Stomach (tissue), 19 donors: ENCODE measurements at regions of chr11 and their contacts with region 1.

Region 1: GRCh38 chr11:118401151-118401878 is at the start of gene ATP5MG:
- DNase-seq: peak; percentile 91 to 96
- H3K4me3 ChIP-seq: peak within 1 kb of the TSS; percentile 87 to 99 (median 90)
- H3K27ac ChIP-seq: peak within 1 kb of the TSS; percentile 67 to 91 (median 86)
- H3K4me1 ChIP-seq: peaks cover 17 to 55% (median 35%) of the 10 kb centered on the region in 4 donors
- H3K27me3 ChIP-seq: no peaks in the 10 kb centered on the region
- CTCF ChIP-seq: no peak
- EP300 ChIP-seq: no peak
- POLR2A ChIP-seq: no peak
- total RNA-seq, gene ATP5MG: 98.5 to 152 (median 113) TPM

Region 2: GRCh38 chr11:118488480-118489109 is 87.3 kb after region 1 on chr11:
- intact Hi-C with region 1: loop called (anchors 10 kb)
- DNase-seq: peak; percentile 58 to 94
- H3K4me3 ChIP-seq: no peak overlapping the region
- H3K27ac ChIP-seq: no peak overlapping the region
- H3K4me1 ChIP-seq: no peaks in the 10 kb centered on the region
- H3K27me3 ChIP-seq: no peaks in the 10 kb centered on the region
- CTCF ChIP-seq: peak in 5 of 7 experiments; percentile 66 to 82 (median 73)
- EP300 ChIP-seq: no peak
- POLR2A ChIP-seq: no peak